Activated B cell treated with CpG ODN at 0.5 μM for 24 hours (primary cell): ENCODE measurements at regions of chr19 and their contacts with region 1.

Region 1: DNA sequence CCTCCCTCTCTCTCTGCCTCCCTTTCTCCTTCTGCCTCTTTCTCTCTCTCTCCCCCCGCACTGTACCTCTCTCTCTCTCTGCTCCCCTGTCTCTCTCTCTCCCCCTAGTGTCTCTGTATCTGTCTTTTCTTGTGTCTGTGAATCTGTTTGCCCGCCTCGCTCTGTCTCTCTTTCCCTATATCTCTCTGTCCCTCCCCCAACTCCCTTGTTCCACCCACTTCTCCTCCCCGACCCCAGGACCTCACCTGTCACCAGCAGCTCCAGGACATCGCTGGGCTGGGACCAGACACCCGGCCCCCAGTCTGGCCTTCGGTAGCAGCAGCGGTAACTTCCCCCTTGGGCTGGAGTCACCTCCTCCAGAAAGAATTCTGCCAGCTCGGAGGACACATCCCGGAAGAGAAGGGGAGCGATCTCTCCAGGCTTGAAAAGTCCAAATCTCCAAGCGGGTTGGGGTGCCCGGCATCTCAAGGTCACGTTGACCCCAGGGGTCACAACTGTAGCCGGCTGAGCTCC is 3.9 kb downstream of the OSCAR start:
- DNase-seq: no peak
- ATAC-seq: peak; percentile 43
- H3K4me3 Mint-ChIP-seq: peak overlapping the region; percentile 70
- H3K27ac Mint-ChIP-seq: peak overlapping the region; percentile 26
- H3K4me1 Mint-ChIP-seq: peaks cover 9% of the 10 kb centered on the region
- H3K27me3 Mint-ChIP-seq: peaks cover 12% of the 10 kb centered on the region
- CTCF ChIP-seq: no peak

Region 2: GRCh38 chr19:54017261-54017660 is 79.4 kb before region 1 on chr19:
- CTCF ChIA-PET with region 1: no interaction called
- POLR2A ChIA-PET with region 1: no interaction called
- intact Hi-C with region 1: no loop called
- DNase-seq: no peak
- ATAC-seq: no peak
- H3K4me3 Mint-ChIP-seq: no peak overlapping the region
- H3K27ac Mint-ChIP-seq: no peak overlapping the region
- H3K4me1 Mint-ChIP-seq: no peaks in the 10 kb centered on the region
- H3K27me3 Mint-ChIP-seq: peaks cover 18% of the 10 kb centered on the region
- CTCF ChIP-seq: no peak

Region 3: GRCh38 chr19:54081032-54081431 is 15.6 kb before region 1 on chr19 and contains the start of gene TARM1:
- CTCF ChIA-PET with region 1: no interaction called
- POLR2A ChIA-PET with region 1: interaction called, 16 read pairs
- intact Hi-C with region 1: no loop called
- DNase-seq: no peak
- ATAC-seq: no peak
- H3K4me3 Mint-ChIP-seq: no peak within 1 kb of the TSS
- H3K27ac Mint-ChIP-seq: no peak within 1 kb of the TSS
- H3K4me1 Mint-ChIP-seq: no peaks in the 10 kb centered on the region
- H3K27me3 Mint-ChIP-seq: no peaks in the 10 kb centered on the region
- CTCF ChIP-seq: no peak
- total RNA-seq, gene TARM1: not detected in 2 replicates